ENCODE measurements at regions of chr12 and their contacts with region 1.

Region 1: GRCh38 chr12:32755654-32756475 is at the start of gene YARS2:
- DNase-seq: peak; percentile 99
- H3K4me3 ChIP-seq: peak within 1 kb of the TSS; percentile 85
- H3K27ac ChIP-seq: peak within 1 kb of the TSS; percentile 75
- H3K4me1 ChIP-seq: peaks cover 22% of the 10 kb centered on the region
- CTCF ChIP-seq: peak; percentile 99
- total RNA-seq, gene YARS2: 39.0 and 42.8 TPM in 2 replicates

Region 2: DNA sequence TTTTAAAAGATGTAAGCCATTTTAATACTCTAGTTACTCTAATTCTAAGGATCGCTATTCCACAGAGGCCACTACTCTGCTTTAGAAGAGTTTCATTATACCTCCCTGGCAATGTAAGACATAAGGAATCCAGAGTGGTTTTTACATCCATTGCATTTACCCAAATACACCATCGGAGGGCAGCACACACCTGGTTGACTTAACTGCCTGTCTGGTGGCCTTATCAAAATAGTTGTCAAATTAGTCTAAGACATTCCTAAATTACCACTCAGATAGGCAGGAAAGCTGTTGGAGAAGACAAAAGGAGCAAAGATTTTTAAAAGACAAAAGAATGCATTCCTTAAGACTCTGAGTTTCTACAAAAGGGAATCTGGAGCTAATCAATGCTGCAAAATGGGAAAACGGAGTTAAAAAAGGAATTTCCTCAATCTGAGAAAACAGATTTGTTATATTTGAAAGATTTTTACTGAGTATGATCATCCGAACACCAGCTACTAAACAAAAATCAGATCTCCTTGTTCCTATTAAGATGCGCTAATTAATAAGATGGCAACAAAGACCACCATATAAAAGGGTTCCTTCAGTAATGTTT is 390.3 kb before region 1 on chr12:
- CTCF ChIA-PET with region 1: no interaction called
- POLR2A ChIA-PET with region 1: no interaction called
- intact Hi-C with region 1: loop called (anchors 1 kb)
- DNase-seq: peak; percentile 74
- H3K4me3 ChIP-seq: no peak overlapping the region
- H3K27ac ChIP-seq: no peak overlapping the region
- H3K4me1 ChIP-seq: no peaks in the 10 kb centered on the region
- CTCF ChIP-seq: peak; percentile 98

Region 3: DNA sequence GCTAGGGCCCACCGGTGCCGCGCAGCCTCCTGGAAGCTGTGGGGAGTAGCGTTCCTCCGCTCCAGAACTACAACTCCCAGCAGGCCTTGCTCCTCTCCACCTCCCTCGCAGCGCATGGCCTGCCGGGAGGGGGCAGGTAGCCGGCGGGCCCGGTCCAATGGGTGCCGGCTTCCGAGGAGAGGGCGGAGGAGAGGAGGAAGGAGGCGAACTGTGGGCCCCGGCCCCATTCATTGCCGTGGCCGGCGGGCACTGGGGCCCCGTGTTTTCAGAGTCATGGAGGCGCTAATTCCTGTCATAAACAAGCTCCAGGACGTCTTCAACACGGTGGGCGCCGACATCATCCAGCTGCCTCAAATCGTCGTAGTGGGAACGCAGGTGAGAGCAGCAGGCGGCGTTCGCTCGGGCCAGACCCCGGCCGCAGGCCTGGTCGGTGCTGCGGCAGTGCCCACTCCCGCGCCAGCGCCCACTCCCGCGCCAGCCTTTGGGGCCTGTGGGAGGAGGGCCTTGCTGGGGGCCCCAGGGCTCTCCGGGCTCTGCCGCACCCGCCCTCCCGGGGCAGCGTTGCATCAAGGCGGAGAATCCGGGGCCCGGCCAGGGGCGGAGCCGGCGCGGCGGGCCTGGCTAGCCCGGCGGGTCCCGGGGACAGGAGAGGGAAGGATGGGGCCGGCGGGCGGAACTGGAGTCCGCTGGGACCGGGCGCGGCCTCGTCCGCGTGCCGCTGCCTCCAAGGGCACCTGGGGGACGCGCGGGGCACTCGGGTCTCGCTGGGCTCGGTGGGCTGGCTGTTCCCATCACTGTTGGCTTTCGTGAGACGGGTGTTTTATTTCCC is 76.6 kb before region 1 on chr12 and contains the start of gene DNM1L:
- CTCF ChIA-PET with region 1: interaction called, 6 read pairs
- POLR2A ChIA-PET with region 1: no interaction called
- intact Hi-C with region 1: loop called (anchors 2 kb)
- DNase-seq: peak; percentile 94
- H3K4me3 ChIP-seq: peak within 1 kb of the TSS; percentile 87
- H3K27ac ChIP-seq: peak within 1 kb of the TSS; percentile 69
- H3K4me1 ChIP-seq: peaks cover 29% of the 10 kb centered on the region
- CTCF ChIP-seq: no peak
- total RNA-seq, gene DNM1L: 61.1 and 64.1 TPM in 2 replicates

Region 4: GRCh38 chr12:32918890-32919801 is 163.3 kb after region 1 on chr12:
- CTCF ChIA-PET with region 1: no interaction called
- POLR2A ChIA-PET with region 1: no interaction called
- intact Hi-C with region 1: loop called (anchors 1 kb)
- DNase-seq: peak; percentile 11
- H3K4me3 ChIP-seq: no peak overlapping the region
- H3K27ac ChIP-seq: no peak overlapping the region
- H3K4me1 ChIP-seq: no peaks in the 10 kb centered on the region
- CTCF ChIP-seq: peak; percentile 72

Region 5: DNA sequence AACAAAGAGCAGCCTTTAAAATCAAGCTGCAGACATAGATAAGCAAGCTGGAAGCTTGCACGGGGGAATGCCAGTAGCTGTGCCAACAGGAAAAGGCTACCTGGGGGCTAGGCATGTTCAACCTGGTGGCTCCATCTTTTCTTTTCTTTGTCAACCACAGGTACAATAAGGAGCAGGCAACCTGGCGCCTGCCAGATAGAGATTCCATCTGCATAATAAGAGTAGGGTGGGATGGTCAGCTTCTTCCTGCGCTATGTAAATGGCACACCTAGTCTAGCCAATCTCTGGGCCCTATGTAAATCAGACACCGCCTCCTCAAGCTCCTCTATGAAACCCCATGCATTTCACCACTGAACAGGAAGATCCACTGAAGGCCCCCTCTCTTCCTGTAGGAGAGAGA is 228.1 kb after region 1 on chr12:
- CTCF ChIA-PET with region 1: no interaction called
- POLR2A ChIA-PET with region 1: no interaction called
- intact Hi-C with region 1: no loop called
- DNase-seq: no peak
- H3K4me3 ChIP-seq: no peak overlapping the region
- H3K27ac ChIP-seq: no peak overlapping the region
- H3K4me1 ChIP-seq: no peaks in the 10 kb centered on the region
- CTCF ChIP-seq: no peak

Region 6: GRCh38 chr12:34022079-34022830 is 1266.4 kb after region 1 on chr12 and contains the start of gene ALG10:
- CTCF ChIA-PET with region 1: no interaction called
- POLR2A ChIA-PET with region 1: interaction called, 13 read pairs
- intact Hi-C with region 1: loop called (anchors 1 kb)
- DNase-seq: peak; percentile 98
- H3K4me3 ChIP-seq: peak within 1 kb of the TSS; percentile 95
- H3K27ac ChIP-seq: peak within 1 kb of the TSS; percentile 56
- H3K4me1 ChIP-seq: peaks cover 17% of the 10 kb centered on the region
- CTCF ChIP-seq: peak; percentile 82
- total RNA-seq, gene ALG10: 20.7 and 28.6 TPM in 2 replicates

Measured in OCI-LY7 (cell line).